ENCODE measurements at regions of chr12 and their contacts with region 1.

Region 1: DNA sequence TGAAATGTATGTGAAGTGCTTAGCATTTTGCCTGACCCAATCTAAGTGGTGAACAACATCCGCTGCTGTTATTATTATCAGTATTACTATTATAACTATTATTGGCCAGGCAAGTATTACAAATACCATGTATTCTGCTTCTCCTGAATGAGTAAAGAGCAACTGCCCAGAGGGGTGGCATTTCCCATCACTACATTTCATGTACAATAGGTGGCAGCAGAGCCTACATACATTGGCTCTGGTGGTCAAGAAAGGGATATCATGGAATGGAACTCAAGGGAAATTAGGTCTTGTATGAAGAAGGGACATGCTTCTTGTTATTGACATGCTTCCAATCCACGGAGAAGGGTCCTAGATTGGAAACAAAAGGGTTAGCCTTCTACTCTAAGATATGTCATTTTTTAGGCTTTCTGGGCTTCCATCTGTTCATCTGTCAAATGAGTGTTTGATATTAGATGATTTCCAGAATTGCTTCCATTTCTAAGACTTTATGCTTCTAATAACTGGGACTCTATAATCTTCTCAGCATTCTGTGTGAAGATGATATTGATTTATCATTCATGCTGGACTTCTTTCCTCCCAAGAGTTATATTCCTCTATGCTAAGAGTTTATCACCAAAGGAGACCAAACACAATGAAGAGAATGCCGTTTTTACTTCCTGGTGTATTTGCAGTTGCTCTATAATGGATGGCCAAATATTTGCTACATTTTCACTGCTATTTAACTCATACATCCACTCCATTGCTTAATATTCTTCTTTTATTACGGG is 239.1 kb downstream of the SSPN start:
- DNase-seq: no peak
- H3K4me3 Mint-ChIP-seq: no peak overlapping the region
- H3K27ac Mint-ChIP-seq: no peak overlapping the region
- H3K4me1 Mint-ChIP-seq: no peaks in the 10 kb centered on the region
- H3K27me3 Mint-ChIP-seq: no peaks in the 10 kb centered on the region

Region 2: DNA sequence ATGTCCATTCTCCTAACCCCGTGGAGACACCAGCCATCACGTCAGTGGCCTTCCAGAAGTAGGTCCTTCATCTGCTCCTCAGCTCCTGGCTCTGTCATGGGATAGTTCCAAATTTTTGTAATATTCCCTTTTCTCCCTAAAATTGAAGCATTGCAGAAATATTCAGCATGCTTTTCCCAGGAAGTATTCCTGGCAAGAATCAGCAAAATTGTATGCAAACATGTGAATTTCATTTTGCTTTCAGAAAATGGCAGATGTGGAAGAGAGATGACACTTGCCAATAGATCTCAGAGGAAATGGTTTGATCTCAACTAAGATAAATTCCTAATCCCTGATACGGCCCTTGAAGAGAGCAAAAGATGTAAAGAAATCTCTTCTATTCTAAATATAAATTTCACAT is 99.6 kb after region 1 on chr12:
- intact Hi-C with region 1: no loop called
- DNase-seq: no peak
- H3K4me3 Mint-ChIP-seq: no peak overlapping the region
- H3K27ac Mint-ChIP-seq: no peak overlapping the region
- H3K4me1 Mint-ChIP-seq: no peaks in the 10 kb centered on the region
- H3K27me3 Mint-ChIP-seq: no peaks in the 10 kb centered on the region

Region 3: DNA sequence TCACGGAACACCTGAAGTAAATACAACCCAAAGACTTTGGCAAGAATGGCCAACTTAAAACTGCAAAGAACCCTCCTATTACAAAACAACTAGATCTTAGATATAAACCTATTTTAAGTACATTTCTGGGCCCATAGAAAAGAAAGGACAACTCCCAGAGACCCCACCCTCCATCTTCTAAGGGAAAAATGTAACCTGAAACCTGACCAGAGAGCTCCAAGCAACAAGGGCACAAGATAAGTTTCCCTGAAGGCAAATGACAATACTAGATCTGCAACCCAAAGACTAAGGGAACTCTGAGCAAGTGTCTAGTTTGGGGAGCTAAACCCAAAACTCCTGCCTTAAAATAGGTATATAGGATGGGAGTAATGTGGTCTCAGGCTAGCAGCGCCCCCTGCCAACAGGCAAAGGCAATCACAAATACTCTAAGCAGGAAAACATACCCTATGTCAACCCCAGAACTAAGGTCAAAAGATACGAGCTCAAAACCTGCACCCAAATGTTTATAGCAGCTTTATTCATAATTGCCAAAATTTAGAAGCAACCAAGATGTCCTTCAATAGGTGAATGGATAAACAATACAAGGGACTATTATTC is 179.6 kb after region 1 on chr12:
- intact Hi-C with region 1: loop called (anchors 1 kb)
- DNase-seq: no peak
- H3K4me3 Mint-ChIP-seq: no peak overlapping the region
- H3K27ac Mint-ChIP-seq: no peak overlapping the region
- H3K4me1 Mint-ChIP-seq: no peaks in the 10 kb centered on the region
- H3K27me3 Mint-ChIP-seq: no peaks in the 10 kb centered on the region

Region 4: DNA sequence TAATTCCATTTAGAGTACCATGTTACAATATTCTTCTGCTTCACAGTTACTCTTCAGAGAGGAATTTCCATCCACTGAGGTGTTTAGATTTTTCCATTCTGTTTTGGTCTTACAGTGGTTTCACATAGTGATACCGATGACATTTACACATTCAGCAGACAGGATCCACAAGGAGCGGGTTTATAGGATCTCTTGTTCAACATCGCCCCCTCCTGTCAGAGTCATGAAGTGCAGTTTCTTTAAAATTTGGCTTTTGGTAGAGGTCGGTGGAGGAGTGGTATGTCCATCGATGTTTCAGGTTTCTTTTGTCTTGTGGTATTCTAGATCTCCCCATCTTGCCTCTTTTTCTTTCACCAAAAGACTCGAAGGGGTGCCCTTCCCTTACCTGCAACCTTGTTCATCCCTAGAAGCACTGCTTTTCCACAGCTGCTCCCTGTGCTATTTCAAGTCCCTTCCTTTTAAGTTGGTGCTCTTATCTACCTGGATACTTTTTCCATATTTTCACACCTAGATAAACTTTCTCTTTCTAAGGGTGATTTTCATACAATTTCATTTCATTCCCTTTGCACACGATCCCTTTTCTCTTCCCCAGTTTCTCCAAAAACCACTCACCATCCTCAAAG is 217.2 kb after region 1 on chr12:
- intact Hi-C with region 1: loop called (anchors 2 kb)
- DNase-seq: peak; percentile 14
- H3K4me3 Mint-ChIP-seq: no peak overlapping the region
- H3K27ac Mint-ChIP-seq: no peak overlapping the region
- H3K4me1 Mint-ChIP-seq: peaks cover 10% of the 10 kb centered on the region
- H3K27me3 Mint-ChIP-seq: no peaks in the 10 kb centered on the region

Region 5: GRCh38 chr12:26701604-26702215 is 267.2 kb after region 1 on chr12:
- intact Hi-C with region 1: loop called (anchors 1 kb)
- DNase-seq: no peak
- H3K4me3 Mint-ChIP-seq: no peak overlapping the region
- H3K27ac Mint-ChIP-seq: no peak overlapping the region
- H3K4me1 Mint-ChIP-seq: peaks cover 9% of the 10 kb centered on the region
- H3K27me3 Mint-ChIP-seq: no peaks in the 10 kb centered on the region